MCF 10A (cell line): ENCODE measurements at regions of chr20 and their contacts with region 1.

Region 1: DNA sequence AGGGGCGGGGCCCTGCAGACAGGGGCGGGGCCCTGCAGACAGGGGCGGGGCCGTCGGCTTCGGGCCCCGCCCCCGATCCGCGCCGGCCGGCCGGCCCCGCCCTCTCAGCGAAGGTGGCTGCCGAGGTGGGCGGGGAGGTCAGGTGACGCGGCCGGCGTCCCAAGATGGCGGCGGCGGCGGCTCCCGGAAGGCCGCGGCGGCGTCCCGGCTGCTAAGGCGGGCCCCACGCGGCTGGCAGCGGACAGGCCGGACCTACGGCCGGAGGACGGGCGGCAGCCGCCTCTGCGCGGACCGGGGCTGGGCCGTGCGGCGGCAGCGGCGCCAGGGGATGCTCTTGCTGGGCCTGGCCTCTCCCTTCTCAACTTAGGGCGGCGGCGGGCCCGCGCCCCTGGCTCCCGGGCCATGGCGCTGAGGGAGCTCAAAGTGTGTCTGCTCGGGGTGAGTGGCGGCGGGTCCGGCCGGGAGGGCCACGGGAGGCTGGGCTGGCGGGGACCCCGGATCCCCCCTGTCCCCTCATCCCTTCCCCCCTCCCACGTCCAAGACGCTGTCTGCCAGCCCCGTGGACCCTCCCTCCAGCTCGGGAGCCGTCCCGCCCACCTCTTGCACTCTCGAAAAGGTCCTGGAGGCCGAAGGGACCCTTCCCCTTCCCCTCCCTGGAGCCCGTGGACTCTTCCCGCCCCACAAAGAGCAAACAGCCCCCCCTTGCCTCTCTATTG is at the start of gene RAB22A:
- DNase-seq: peak; percentile 68
- H3K4me3 Mint-ChIP-seq: peak within 1 kb of the TSS; percentile 82
- H3K27ac Mint-ChIP-seq: peak within 1 kb of the TSS; percentile 71
- H3K4me1 Mint-ChIP-seq: peaks cover 18% of the 10 kb centered on the region
- H3K27me3 Mint-ChIP-seq: no peaks in the 10 kb centered on the region
- CTCF ChIP-seq: no peak
- total RNA-seq, gene RAB22A: 18.4 and 18.9 TPM in 2 replicates

Region 2: DNA sequence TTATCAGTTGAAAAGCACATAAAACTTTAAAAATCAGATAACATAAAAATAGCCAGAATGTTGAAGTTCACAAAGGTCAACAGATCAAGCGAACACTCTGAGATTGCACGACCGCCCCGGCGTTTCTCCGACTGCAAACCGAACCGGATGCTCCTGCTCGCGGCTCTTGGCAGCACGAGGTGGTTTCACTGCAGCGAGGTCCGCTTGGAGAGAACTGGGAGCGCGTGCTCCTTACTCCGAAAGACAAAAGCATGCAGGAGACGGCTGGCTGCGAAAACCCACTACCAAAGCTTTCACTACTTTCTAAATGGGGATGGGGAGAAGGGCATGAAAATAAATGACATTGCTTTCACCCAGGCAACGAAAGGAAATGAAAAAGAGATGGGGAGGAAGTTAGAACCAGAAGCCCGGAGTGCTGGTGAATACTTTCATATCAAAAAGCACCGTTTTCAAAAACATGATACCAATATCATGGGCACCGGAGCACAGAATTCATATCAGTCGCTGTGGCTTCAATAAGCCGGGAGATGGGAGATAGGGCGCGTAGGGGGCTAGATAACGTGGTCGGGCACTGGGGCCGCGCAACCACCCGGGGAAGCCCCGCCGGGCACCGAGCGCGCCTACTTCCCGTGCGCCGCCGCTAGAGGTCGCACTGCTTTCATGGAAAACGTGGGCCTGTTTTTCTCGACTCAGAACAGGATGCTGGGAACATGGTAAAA is 73.0 kb before region 1 on chr20:
- CTCF ChIA-PET with region 1: interaction called, 4 read pairs
- POLR2A ChIA-PET with region 1: interaction called, 3 read pairs
- intact Hi-C with region 1: loop called (anchors 5 kb)
- DNase-seq: peak; percentile 71
- H3K4me3 Mint-ChIP-seq: peak overlapping the region; percentile 77
- H3K27ac Mint-ChIP-seq: no peak overlapping the region
- H3K4me1 Mint-ChIP-seq: no peaks in the 10 kb centered on the region
- H3K27me3 Mint-ChIP-seq: no peaks in the 10 kb centered on the region
- CTCF ChIP-seq: peak; percentile 96

Region 3: DNA sequence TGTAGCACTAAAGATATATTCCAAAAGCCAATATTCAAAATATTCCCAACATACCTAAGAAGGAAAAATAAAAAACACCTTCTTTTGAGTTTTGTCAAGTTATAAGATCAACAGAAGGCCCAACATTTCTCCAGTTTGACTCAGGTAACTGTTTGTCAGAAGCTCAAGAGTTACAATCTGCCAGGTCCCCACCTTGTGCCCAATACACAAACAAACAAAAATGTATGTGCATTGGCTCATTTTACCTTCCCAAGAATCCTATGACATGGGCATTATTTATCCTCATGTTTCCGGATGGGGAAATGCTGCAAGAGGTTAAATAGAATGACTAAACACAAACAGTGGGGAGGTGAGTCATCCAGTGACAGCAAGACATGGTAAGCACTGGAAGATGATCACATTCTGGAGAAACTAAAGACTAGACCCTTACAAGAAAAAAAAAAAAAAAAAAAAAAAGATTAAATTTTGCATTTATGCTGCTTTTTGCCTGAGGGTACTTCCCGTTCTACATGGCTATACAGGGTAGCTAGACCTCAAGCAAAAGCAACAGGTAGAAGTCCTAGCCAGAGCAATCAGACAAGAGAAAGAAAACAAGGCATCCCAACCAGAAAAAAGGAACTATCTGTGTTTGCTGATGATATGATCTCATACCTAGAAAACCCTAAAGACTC is 57.7 kb before region 1 on chr20:
- CTCF ChIA-PET with region 1: interaction called, 3 read pairs
- POLR2A ChIA-PET with region 1: interaction called, 3 read pairs
- intact Hi-C with region 1: loop called (anchors 2 kb)
- DNase-seq: peak; percentile 91
- H3K4me3 Mint-ChIP-seq: no peak overlapping the region
- H3K27ac Mint-ChIP-seq: peak overlapping the region; percentile 88
- H3K4me1 Mint-ChIP-seq: peaks cover 7% of the 10 kb centered on the region
- H3K27me3 Mint-ChIP-seq: no peaks in the 10 kb centered on the region
- CTCF ChIP-seq: no peak

Region 4: GRCh38 chr20:58286729-58287128 is 23.0 kb before region 1 on chr20:
- CTCF ChIA-PET with region 1: interaction called, 3 read pairs
- POLR2A ChIA-PET with region 1: interaction called, 8 read pairs
- intact Hi-C with region 1: loop called (anchors 1 kb)
- DNase-seq: no peak
- H3K4me3 Mint-ChIP-seq: no peak overlapping the region
- H3K27ac Mint-ChIP-seq: no peak overlapping the region
- H3K4me1 Mint-ChIP-seq: no peaks in the 10 kb centered on the region
- H3K27me3 Mint-ChIP-seq: no peaks in the 10 kb centered on the region
- CTCF ChIP-seq: no peak

Region 5: DNA sequence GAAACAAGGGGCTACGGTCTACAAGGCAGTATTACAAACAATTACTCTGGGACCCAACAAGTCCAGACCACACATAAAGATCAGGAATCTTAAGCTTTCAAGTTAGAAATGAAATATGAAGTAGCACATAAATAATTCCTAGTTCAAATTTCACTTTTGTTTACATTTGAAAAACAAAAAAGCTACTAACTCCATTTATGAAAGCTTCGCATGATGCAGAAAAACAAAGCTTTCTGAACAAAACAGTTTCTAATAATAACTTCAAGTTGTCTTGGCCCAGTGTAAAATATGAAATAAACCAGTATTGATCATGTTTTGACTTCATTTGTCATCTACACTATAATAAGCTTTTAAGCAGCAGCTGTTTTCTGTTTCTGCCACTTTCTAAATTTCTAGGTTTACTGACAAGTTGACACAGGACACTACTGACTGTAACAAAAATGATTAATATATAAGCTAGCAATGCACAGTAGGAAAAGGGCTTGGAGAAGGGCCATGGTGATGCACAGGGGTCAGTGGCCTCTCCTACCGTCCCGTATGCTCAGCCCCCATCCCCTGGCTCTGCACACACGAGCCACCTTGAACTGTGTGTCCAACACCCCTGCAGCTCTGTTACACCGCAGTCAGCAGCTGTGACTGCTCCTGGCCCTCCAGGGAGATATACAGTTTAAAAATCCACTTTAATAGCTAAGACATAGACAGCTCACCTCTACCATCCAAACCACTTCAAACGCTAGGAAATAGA is 13.5 kb before region 1 on chr20:
- CTCF ChIA-PET with region 1: interaction called, 5 read pairs
- POLR2A ChIA-PET with region 1: interaction called, 10 read pairs
- intact Hi-C with region 1: no loop called
- DNase-seq: no peak
- H3K4me3 Mint-ChIP-seq: no peak overlapping the region
- H3K27ac Mint-ChIP-seq: no peak overlapping the region
- H3K4me1 Mint-ChIP-seq: no peaks in the 10 kb centered on the region
- H3K27me3 Mint-ChIP-seq: no peaks in the 10 kb centered on the region
- CTCF ChIP-seq: no peak

Region 6: GRCh38 chr20:58321205-58321604 is 11.5 kb after region 1 on chr20:
- CTCF ChIA-PET with region 1: interaction called, 3 read pairs
- POLR2A ChIA-PET with region 1: interaction called, 10 read pairs
- intact Hi-C with region 1: no loop called
- DNase-seq: no peak
- H3K4me3 Mint-ChIP-seq: no peak overlapping the region
- H3K27ac Mint-ChIP-seq: no peak overlapping the region
- H3K4me1 Mint-ChIP-seq: no peaks in the 10 kb centered on the region
- H3K27me3 Mint-ChIP-seq: no peaks in the 10 kb centered on the region
- CTCF ChIP-seq: no peak

Region 7: GRCh38 chr20:58397429-58397828 is 87.7 kb after region 1 on chr20:
- CTCF ChIA-PET with region 1: no interaction called
- POLR2A ChIA-PET with region 1: no interaction called
- intact Hi-C with region 1: no loop called
- DNase-seq: no peak
- H3K4me3 Mint-ChIP-seq: no peak overlapping the region
- H3K27ac Mint-ChIP-seq: no peak overlapping the region
- H3K4me1 Mint-ChIP-seq: peaks cover 12% of the 10 kb centered on the region
- H3K27me3 Mint-ChIP-seq: no peaks in the 10 kb centered on the region
- CTCF ChIP-seq: no peak

Region 8: GRCh38 chr20:58407966-58408557 is 98.3 kb after region 1 on chr20:
- CTCF ChIA-PET with region 1: no interaction called
- POLR2A ChIA-PET with region 1: interaction called, 10 read pairs
- intact Hi-C with region 1: no loop called
- DNase-seq: peak; percentile 54
- H3K4me3 Mint-ChIP-seq: peak overlapping the region; percentile 56
- H3K27ac Mint-ChIP-seq: no peak overlapping the region
- H3K4me1 Mint-ChIP-seq: peaks cover 21% of the 10 kb centered on the region
- H3K27me3 Mint-ChIP-seq: no peaks in the 10 kb centered on the region
- CTCF ChIP-seq: no peak